Activated CD4-positive, alpha-beta T cell treated with anti-CD3 and anti-CD28 coated beads for 36 hours (primary cell): ENCODE measurements at regions of chr6 and their contacts with region 1.

Region 1: GRCh38 chr6:35139908-35140655 is 1.1 kb downstream of the TCP11 start:
- DNase-seq: peak; percentile 70
- ATAC-seq: peak; percentile 39
- H3K4me3 Mint-ChIP-seq: no peak overlapping the region
- H3K27ac Mint-ChIP-seq: no peak overlapping the region
- H3K4me1 Mint-ChIP-seq: peaks cover 13% of the 10 kb centered on the region
- H3K27me3 Mint-ChIP-seq: peaks cover 18% of the 10 kb centered on the region

Region 2: DNA sequence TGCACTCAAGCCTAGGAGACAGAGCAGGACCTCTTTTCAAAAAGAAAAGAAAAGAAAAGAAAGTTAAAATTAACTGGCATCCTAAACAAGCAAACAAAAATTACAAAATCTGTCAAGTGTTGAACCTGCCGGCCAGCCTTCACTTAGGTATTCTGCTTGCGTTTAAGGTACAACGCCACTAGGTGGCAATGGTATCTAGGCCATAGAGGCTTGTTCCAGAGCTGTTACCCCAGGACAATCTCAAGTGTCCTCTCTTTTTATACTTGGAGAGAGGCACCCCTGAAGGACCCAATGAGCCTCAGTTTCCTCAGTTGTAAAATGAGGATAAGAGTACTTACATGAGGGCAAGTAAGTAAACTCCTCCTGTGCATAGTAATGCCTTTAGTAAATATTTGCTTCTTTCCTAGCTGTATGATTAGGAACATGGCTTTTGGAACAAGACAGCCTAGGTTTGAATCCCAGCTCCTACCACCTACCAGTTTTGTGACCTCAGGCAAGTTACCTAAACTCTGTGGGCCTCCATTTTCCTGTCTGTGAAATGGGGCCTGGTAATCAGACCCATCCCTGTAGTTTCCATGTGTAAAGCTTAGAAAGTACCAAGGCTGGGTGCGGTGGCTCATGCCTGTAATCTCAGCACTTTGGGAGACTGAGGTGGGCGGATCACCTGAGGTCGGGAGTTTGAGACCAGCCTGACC is 680.0 kb before region 1 on chr6:
- CTCF ChIA-PET with region 1: interaction called, 9 read pairs
- POLR2A ChIA-PET with region 1: no interaction called
- intact Hi-C with region 1: loop called in 1 of 2 experiments (anchors 5 kb)
- DNase-seq: peak; percentile 73
- ATAC-seq: peak; percentile 84
- H3K4me3 Mint-ChIP-seq: no peak overlapping the region
- H3K27ac Mint-ChIP-seq: no peak overlapping the region
- H3K4me1 Mint-ChIP-seq: no peaks in the 10 kb centered on the region
- H3K27me3 Mint-ChIP-seq: peaks cover 3% of the 10 kb centered on the region

Region 3: GRCh38 chr6:34526992-34527728 is 612.9 kb before region 1 on chr6:
- CTCF ChIA-PET with region 1: no interaction called
- POLR2A ChIA-PET with region 1: no interaction called
- intact Hi-C with region 1: loop called in 1 of 2 experiments (anchors 2 kb)
- DNase-seq: peak; percentile 98
- ATAC-seq: peak; percentile 100
- H3K4me3 Mint-ChIP-seq: no peak overlapping the region
- H3K27ac Mint-ChIP-seq: no peak overlapping the region
- H3K4me1 Mint-ChIP-seq: peaks cover 3% of the 10 kb centered on the region
- H3K27me3 Mint-ChIP-seq: no peaks in the 10 kb centered on the region

Region 4: GRCh38 chr6:34638834-34639736 is 501.0 kb before region 1 on chr6:
- CTCF ChIA-PET with region 1: no interaction called
- POLR2A ChIA-PET with region 1: no interaction called
- intact Hi-C with region 1: loop called in 1 of 2 experiments (anchors 10 kb)
- DNase-seq: no peak
- ATAC-seq: no peak
- H3K4me3 Mint-ChIP-seq: no peak overlapping the region
- H3K27ac Mint-ChIP-seq: peak overlapping the region; percentile 39
- H3K4me1 Mint-ChIP-seq: peaks cover 16% of the 10 kb centered on the region
- H3K27me3 Mint-ChIP-seq: no peaks in the 10 kb centered on the region

Region 5: GRCh38 chr6:34788111-34788510 is 352.0 kb before region 1 on chr6:
- CTCF ChIA-PET with region 1: no interaction called
- POLR2A ChIA-PET with region 1: no interaction called
- intact Hi-C with region 1: no loop called
- DNase-seq: no peak
- ATAC-seq: no peak
- H3K4me3 Mint-ChIP-seq: no peak overlapping the region
- H3K27ac Mint-ChIP-seq: no peak overlapping the region
- H3K4me1 Mint-ChIP-seq: peaks cover 11% of the 10 kb centered on the region
- H3K27me3 Mint-ChIP-seq: no peaks in the 10 kb centered on the region

Region 6: GRCh38 chr6:35128496-35128895 is 11.6 kb before region 1 on chr6:
- CTCF ChIA-PET with region 1: interaction called, 20 read pairs
- POLR2A ChIA-PET with region 1: no interaction called
- intact Hi-C with region 1: no loop called
- DNase-seq: no peak
- ATAC-seq: no peak
- H3K4me3 Mint-ChIP-seq: no peak overlapping the region
- H3K27ac Mint-ChIP-seq: no peak overlapping the region
- H3K4me1 Mint-ChIP-seq: no peaks in the 10 kb centered on the region
- H3K27me3 Mint-ChIP-seq: peaks cover 3% of the 10 kb centered on the region

Region 7: GRCh38 chr6:35202066-35202546 is 62.0 kb after region 1 on chr6:
- CTCF ChIA-PET with region 1: interaction called, 27 read pairs
- POLR2A ChIA-PET with region 1: no interaction called
- intact Hi-C with region 1: no loop called
- DNase-seq: no peak
- ATAC-seq: no peak
- H3K4me3 Mint-ChIP-seq: no peak overlapping the region
- H3K27ac Mint-ChIP-seq: no peak overlapping the region
- H3K4me1 Mint-ChIP-seq: no peaks in the 10 kb centered on the region
- H3K27me3 Mint-ChIP-seq: peaks cover 26% of the 10 kb centered on the region

Region 8: GRCh38 chr6:35240840-35241801 is 101.0 kb after region 1 on chr6:
- CTCF ChIA-PET with region 1: interaction called, 15 read pairs
- POLR2A ChIA-PET with region 1: no interaction called
- intact Hi-C with region 1: no loop called
- DNase-seq: peak; percentile 86
- ATAC-seq: peak; percentile 96
- H3K4me3 Mint-ChIP-seq: no peak overlapping the region
- H3K27ac Mint-ChIP-seq: no peak overlapping the region
- H3K4me1 Mint-ChIP-seq: no peaks in the 10 kb centered on the region
- H3K27me3 Mint-ChIP-seq: no peaks in the 10 kb centered on the region